Gastrocnemius medialis (tissue), 4 donors: ENCODE measurements at regions of chr12 and their contacts with region 1.

Region 1: GRCh38 chr12:11486623-11487444 is 91.5 kb upstream of the PRB2 start:
- DNase-seq: peak; percentile 33 to 48
- ATAC-seq: peak; percentile 75 to 79
- H3K4me3 ChIP-seq: no peak overlapping the region
- H3K27ac ChIP-seq: no peak overlapping the region
- H3K4me1 ChIP-seq: no peaks in the 10 kb centered on the region
- H3K27me3 ChIP-seq: no peaks in the 10 kb centered on the region
- CTCF ChIP-seq: peak; percentile 68 to 89 (median 84)
- POLR2A ChIP-seq: no peak

Region 2: GRCh38 chr12:10641735-10642500 is 844.9 kb before region 1 on chr12:
- in situ Hi-C with region 1: loop called in 1 of 4 experiments (anchors 25 kb)
- intact Hi-C with region 1: no loop called
- DNase-seq: no peak
- ATAC-seq: no peak
- H3K4me3 ChIP-seq: no peak overlapping the region
- H3K27ac ChIP-seq: no peak overlapping the region
- H3K4me1 ChIP-seq: no peaks in the 10 kb centered on the region
- H3K27me3 ChIP-seq: no peaks in the 10 kb centered on the region
- CTCF ChIP-seq: no peak
- POLR2A ChIP-seq: no peak

Region 3: DNA sequence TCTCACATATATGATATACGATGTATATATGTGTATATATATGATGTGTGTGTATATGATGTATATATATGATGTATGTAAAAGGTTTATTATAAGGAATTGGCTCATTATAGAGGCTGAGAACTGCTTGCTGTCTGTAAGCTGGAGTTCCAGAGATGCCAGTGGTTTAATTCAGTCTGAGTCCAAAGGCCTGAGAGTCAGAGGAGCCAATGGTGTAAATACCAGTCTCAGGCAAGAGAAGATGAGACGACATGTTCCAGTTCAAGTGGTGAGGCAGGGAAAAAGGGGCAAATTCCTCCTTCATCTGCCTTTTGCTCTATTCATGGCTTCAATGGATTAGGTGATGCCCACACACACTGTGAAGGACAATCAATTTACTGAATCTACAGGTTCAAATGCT is 795.9 kb before region 1 on chr12:
- in situ Hi-C with region 1: no loop called
- intact Hi-C with region 1: loop called (anchors 10 kb)
- DNase-seq: no peak
- ATAC-seq: no peak
- H3K4me3 ChIP-seq: no peak overlapping the region
- H3K27ac ChIP-seq: peak overlapping the region in 1 of 4 donors; percentile 13
- H3K4me1 ChIP-seq: peaks cover 8 to 19% of the 10 kb centered on the region in 2 donors
- H3K27me3 ChIP-seq: no peaks in the 10 kb centered on the region
- CTCF ChIP-seq: no peak
- POLR2A ChIP-seq: no peak

Region 4: GRCh38 chr12:10771132-10771733 is 715.6 kb before region 1 on chr12:
- in situ Hi-C with region 1: loop called (anchors 5 to 10 kb)
- intact Hi-C with region 1: loop called (anchors 2 kb)
- DNase-seq: no peak
- ATAC-seq: no peak
- H3K4me3 ChIP-seq: no peak overlapping the region
- H3K27ac ChIP-seq: no peak overlapping the region
- H3K4me1 ChIP-seq: no peaks in the 10 kb centered on the region
- H3K27me3 ChIP-seq: peaks cover 0 to 8% (median 0%) of the 10 kb centered on the region in 3 donors
- CTCF ChIP-seq: peak; percentile 48 to 84 (median 63)
- POLR2A ChIP-seq: no peak

Region 5: GRCh38 chr12:10779103-10779502 is 707.7 kb before region 1 on chr12:
- in situ Hi-C with region 1: loop called (anchors 5 to 10 kb)
- intact Hi-C with region 1: no loop called
- DNase-seq: no peak
- ATAC-seq: no peak
- H3K4me3 ChIP-seq: no peak overlapping the region
- H3K27ac ChIP-seq: no peak overlapping the region
- H3K4me1 ChIP-seq: no peaks in the 10 kb centered on the region
- H3K27me3 ChIP-seq: no peaks in the 10 kb centered on the region
- CTCF ChIP-seq: no peak
- POLR2A ChIP-seq: no peak

Region 6: DNA sequence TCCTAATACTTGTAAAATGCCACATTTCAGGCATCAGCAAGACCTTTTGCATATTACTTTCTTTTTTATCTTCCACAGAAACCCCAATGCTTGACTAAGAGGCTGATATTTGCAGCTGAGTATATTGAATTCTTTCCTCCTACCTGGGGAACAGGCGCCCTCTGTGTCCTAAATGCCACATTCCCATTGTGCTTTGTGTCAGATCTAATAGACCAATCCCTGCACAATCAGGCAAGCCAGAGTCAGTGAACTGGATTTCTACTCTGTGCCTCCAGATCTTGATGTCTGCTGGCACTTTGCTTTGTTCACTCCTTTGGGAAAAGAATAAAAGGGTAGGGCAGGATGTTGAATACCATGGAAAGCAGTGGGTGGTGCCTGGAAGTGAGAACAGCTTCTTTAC is 277.7 kb before region 1 on chr12:
- in situ Hi-C with region 1: no loop called
- intact Hi-C with region 1: loop called (anchors 10 kb)
- DNase-seq: no peak
- ATAC-seq: no peak
- H3K4me3 ChIP-seq: no peak overlapping the region
- H3K27ac ChIP-seq: no peak overlapping the region
- H3K4me1 ChIP-seq: no peaks in the 10 kb centered on the region
- H3K27me3 ChIP-seq: no peaks in the 10 kb centered on the region
- CTCF ChIP-seq: no peak
- POLR2A ChIP-seq: no peak

Region 7: DNA sequence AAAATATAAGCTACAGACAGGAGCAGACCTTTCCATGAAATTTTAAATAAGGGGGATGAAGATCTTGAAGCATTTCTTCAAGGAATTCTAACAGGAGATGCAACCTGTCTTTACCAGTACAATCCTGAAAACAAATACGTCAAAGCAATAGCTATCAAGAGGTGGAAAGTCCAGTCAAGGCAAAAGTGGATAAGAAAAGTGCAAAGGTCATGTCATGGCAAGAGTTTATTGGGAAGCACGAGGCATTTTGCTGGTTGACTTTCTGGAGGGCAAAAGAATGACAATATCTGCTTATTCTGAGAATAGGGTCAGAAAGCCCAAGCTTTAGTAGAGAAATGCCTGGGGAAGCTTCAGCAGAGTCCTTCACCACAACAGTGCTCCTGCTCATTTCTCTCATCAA is 142.3 kb before region 1 on chr12:
- in situ Hi-C with region 1: no loop called
- intact Hi-C with region 1: no loop called
- DNase-seq: no peak
- ATAC-seq: no peak
- H3K4me3 ChIP-seq: no peak overlapping the region
- H3K27ac ChIP-seq: no peak overlapping the region
- H3K4me1 ChIP-seq: no peaks in the 10 kb centered on the region
- H3K27me3 ChIP-seq: no peaks in the 10 kb centered on the region
- CTCF ChIP-seq: no peak
- POLR2A ChIP-seq: no peak

Region 8: DNA sequence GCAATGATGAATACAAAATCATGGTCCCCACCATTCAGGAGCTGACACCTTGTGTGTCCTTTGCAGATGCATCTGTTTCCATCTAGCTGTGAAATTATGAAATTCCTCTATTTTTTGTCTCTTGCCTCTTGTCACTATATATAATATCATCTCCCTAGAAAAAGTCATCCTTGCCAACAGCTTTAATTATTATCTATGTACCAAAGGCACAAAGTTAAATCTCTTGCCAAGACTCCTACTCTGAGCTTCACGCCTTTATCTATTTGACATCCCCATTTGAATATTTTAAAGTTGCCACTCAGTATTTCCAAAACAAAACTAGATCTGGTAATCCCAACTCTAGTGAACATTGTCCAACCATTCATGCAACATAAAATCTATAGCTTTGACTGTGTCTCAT is 59.5 kb before region 1 on chr12:
- in situ Hi-C with region 1: no loop called
- intact Hi-C with region 1: no loop called
- DNase-seq: no peak
- ATAC-seq: no peak
- H3K4me3 ChIP-seq: no peak overlapping the region
- H3K27ac ChIP-seq: no peak overlapping the region
- H3K4me1 ChIP-seq: no peaks in the 10 kb centered on the region
- H3K27me3 ChIP-seq: no peaks in the 10 kb centered on the region
- CTCF ChIP-seq: no peak
- POLR2A ChIP-seq: no peak